Left ventricle myocardium superior (tissue), 1 donor: ENCODE measurements at regions of chr2 and their contacts with region 1.

Region 1: GRCh38 chr2:178136321-178137025 is 24.2 kb downstream of the RBM45 start:
- DNase-seq: no peak
- ATAC-seq: no peak

Region 2: GRCh38 chr2:178090483-178090882 is 46.0 kb before region 1 on chr2:
- intact Hi-C with region 1: no loop called
- DNase-seq: no peak
- ATAC-seq: no peak

Region 3: DNA sequence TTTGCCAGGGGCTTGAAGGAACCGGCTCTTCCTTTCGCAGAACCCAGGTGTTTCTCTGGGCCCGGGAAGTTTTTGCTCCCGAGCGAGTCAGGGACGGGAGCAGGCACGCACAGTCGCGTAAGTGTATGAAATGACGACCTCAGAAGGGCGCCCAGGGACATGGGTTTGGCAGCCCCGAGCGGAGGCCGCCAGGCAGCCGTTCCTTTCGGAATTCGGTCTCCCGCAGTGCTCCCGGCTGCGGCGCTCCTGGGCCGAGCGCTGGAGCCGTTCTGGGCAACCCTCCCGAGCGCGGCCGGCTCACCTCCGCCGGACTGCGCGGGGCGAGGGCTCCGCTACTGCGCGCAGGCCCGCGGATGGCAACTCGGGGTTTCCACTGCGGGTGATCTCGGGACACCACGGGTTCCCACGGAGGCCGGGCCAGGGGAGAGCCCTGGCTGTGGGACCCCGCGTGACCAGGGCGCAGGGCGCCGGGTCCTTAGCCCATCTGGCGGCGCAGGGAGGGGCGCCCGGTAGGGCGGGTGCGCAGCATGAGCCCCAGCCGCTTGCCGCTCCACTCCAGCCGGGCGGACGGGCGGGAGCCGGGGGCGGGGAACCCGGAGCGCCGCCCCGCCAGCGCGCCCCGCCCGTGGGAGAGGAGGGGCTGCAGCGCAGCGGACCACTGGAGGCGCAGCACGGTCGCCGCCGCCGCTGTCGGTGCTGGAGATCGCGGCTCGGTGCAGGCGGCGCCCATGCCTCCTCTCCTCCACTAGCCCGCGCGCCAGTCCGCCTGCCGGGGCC is 57.5 kb after region 1 on chr2 and contains the start of gene OSBPL6:
- intact Hi-C with region 1: loop called (anchors 10 kb)
- DNase-seq: peak; percentile 93
- ATAC-seq: peak; percentile 97
- total RNA-seq, gene OSBPL6: 4.6 TPM

Region 4: DNA sequence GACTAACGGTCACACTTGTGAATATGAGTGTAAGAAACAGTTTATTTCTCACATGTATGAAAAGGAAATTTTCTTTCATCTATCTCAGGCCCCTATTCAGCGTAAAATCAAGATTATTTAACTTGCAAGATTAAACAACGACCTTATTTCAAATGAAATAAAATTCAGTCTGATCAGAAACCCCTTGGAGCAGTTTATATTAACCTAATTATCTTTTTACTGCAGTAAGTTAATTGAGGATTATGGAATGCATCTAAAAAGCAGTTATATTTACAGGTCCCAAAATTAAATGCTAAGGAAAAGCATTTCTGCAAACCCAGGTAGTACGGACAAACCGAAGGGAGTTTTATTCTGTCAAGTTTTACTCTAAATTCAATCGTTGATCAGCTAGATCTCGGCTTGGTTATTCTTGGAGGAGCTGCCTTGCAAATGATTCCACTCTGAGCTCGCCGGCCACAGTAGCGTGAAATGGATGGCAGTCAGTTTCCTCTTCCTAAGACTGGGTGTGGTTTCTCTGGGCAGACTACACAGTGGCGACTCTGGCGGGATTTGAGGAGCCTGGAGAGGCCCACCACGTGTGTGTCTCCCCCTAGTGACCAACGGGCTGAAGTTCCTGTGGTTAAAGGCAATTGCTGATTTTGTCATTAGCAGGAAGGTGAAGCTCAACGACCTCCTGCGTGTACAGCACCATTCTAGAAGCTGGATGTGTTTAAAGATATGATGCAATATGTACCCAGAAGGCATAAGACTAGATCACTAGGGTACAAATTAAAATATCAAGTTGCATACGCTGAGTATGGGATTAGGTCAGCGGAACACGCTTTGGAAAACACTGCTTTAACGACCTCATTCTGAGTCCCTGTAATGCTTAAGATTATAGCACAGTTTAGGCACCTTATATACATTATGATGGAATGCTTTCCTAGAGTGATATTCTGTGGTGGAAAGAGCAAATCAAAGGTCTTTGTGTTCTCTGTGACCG is 278.1 kb after region 1 on chr2:
- intact Hi-C with region 1: loop called (anchors 10 kb)
- DNase-seq: peak; percentile 88
- ATAC-seq: peak; percentile 96

Region 5: GRCh38 chr2:178804791-178805190 is 668.3 kb after region 1 on chr2:
- intact Hi-C with region 1: no loop called
- DNase-seq: no peak
- ATAC-seq: no peak